ENCODE measurements at regions of chr6 and their contacts with region 1.

Region 1: GRCh38 chr6:131914967-131915751 is 36.0 kb downstream of the CCN2 start:
- DNase-seq: peak; percentile 29 to 71
- ATAC-seq: peak; percentile 78 to 89
- H3K4me3 ChIP-seq: no peak overlapping the region
- H3K27ac ChIP-seq: no peak overlapping the region
- H3K4me1 ChIP-seq: no peaks in the 10 kb centered on the region
- CTCF ChIP-seq: peak; percentile 76
- EP300 ChIP-seq: no peak
- POLR2A ChIP-seq: no peak
- RAD21 ChIP-seq: peak; percentile 68 to 80

Region 2: GRCh38 chr6:131581523-131581922 is 333.6 kb before region 1 on chr6:
- CTCF ChIA-PET with region 1: no interaction called
- POLR2A ChIA-PET with region 1: no interaction called
- DNase-seq: no peak
- ATAC-seq: no peak
- H3K4me3 ChIP-seq: no peak overlapping the region
- H3K27ac ChIP-seq: no peak overlapping the region
- H3K4me1 ChIP-seq: no peaks in the 10 kb centered on the region
- CTCF ChIP-seq: no peak
- EP300 ChIP-seq: no peak
- POLR2A ChIP-seq: no peak
- RAD21 ChIP-seq: no peak

Region 3: DNA sequence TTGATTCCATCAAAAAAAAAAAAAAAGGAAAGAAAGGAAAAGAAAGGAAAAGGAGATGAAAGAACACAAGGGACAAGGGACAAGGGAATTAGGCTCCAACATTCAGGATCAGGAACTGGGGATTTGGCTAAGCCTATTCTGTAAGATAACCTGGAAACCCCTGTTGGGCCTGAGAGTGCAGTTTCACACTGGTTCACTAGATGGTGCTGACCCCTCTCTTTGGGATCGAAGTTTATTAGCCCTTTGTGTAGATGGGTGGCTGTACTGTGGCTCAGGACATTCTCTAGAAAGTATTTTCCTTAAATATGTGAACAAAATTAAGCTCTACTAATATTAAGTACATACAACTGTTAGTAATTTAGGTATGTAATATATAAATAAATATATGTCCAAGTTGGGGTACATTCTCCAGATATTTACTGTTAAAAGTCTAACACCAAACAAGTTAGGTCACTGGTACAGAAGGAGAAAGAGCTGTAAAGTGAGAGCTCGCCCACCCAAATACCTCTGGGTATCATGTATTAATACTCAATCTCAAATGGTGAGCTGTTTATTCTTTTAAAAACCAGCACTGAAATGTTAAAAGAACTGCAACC is 220.2 kb before region 1 on chr6:
- CTCF ChIA-PET with region 1: interaction called, 72 read pairs
- POLR2A ChIA-PET with region 1: no interaction called
- DNase-seq: peak; percentile 50 to 54
- ATAC-seq: peak; percentile 74 to 98; a peak in 5 of 6 replicates
- H3K4me3 ChIP-seq: no peak overlapping the region
- H3K27ac ChIP-seq: no peak overlapping the region
- H3K4me1 ChIP-seq: no peaks in the 10 kb centered on the region
- CTCF ChIP-seq: peak; percentile 63
- EP300 ChIP-seq: no peak
- POLR2A ChIP-seq: no peak
- RAD21 ChIP-seq: peak; percentile 76 to 82

Region 4: GRCh38 chr6:131929264-131929663 is 14.1 kb after region 1 on chr6:
- CTCF ChIA-PET with region 1: interaction called, 32 read pairs
- POLR2A ChIA-PET with region 1: no interaction called
- DNase-seq: no peak
- ATAC-seq: no peak
- H3K4me3 ChIP-seq: no peak overlapping the region
- H3K27ac ChIP-seq: no peak overlapping the region
- H3K4me1 ChIP-seq: 0 out of 3 replicates have a peak, but pooled peaks cover 3% of the 10 kb centered on the region
- CTCF ChIP-seq: no peak
- EP300 ChIP-seq: no peak
- POLR2A ChIP-seq: no peak
- RAD21 ChIP-seq: no peak

Region 5: DNA sequence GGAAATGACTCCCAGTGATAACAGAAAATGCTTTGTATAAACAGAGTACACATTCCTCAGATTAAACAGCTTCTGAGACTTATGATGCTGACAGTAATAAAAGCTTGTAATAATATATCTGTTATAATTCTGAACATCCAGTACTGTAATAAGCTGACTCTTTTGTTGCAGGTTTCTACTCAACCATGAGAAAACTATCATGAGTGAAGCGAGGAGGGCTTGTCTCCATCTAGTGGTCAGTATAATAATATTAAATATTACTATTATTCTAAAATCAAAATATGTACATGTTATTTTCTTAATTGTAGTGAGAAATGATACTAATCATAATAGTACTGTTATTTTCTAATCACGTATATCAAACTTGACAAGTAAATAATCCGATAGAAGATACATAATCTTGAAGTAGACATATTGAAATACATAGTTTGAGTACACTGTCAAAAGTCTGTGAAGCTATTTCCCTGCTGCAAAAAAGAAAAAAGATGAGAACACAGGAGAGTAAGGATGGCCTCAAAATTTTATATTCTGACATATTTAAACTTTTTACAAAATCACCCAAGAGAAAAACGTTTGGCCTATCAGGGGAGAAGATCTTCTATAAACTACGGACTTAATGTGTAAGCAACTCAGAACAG is 303.0 kb after region 1 on chr6:
- CTCF ChIA-PET with region 1: interaction called, 12 read pairs
- POLR2A ChIA-PET with region 1: no interaction called
- DNase-seq: no peak
- ATAC-seq: no peak
- H3K4me3 ChIP-seq: no peak overlapping the region
- H3K27ac ChIP-seq: no peak overlapping the region
- H3K4me1 ChIP-seq: no peaks in the 10 kb centered on the region
- CTCF ChIP-seq: peak; percentile 57
- EP300 ChIP-seq: no peak
- POLR2A ChIP-seq: no peak
- RAD21 ChIP-seq: peak; percentile 48 to 53

Region 6: DNA sequence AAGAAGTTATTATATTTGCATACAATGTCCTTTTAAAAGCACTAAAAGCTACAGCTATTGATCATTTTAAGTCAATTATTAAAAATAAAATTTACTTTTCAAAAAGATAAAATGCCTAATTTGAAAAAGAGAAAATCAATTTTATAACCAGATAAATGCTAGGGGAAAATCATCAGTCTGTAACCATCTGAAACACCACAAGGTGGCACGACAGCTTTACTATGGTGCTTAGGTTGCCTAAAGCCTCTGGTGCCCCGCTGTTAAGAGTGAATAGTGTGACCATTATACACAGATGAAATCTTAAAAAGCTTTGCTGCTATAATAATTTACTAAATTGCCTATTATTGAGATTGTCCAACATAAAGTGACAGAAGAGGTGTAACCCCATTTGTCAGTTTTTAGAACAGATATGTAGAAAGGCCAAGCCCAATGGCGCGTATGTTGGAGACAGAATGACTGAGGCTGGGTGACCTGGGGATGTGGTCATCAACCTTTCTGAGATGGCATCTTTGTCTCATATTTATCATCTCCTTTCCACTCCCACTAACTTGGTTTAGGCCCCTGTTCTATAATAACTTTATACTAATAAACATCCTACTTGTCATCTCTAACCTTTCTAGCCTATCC is 385.3 kb after region 1 on chr6:
- CTCF ChIA-PET with region 1: interaction called, 27 read pairs
- POLR2A ChIA-PET with region 1: no interaction called
- DNase-seq: peak; percentile 16 to 53
- ATAC-seq: peak; percentile 87 to 88; a peak in 5 of 6 replicates
- H3K4me3 ChIP-seq: no peak overlapping the region
- H3K27ac ChIP-seq: no peak overlapping the region
- H3K4me1 ChIP-seq: no peaks in the 10 kb centered on the region
- CTCF ChIP-seq: peak; percentile 75
- EP300 ChIP-seq: no peak
- POLR2A ChIP-seq: no peak
- RAD21 ChIP-seq: peak; percentile 87 to 88